HepG2 (cell line): ENCODE measurements at regions of chr4 and their contacts with region 1.

Region 1: DNA sequence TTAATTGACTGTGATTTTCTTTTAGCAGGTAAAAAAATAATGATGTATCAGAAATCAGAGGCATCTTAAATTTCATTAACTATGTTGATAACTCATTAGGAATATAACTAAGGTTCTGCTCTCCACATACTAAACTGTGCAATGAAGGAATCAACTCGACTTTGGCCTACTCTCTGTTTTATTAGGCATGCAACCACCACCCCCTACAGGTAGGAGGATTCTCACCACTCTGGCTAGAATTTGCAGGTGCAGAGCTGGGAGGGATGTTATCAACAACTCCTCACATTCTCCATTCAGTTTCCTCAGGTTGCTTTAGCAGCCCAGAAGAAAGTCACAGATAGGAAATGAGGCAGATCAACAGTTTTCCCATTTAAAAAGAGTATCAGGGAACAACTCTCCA is 160.1 kb downstream of the COX18 start:
- DNase-seq: peak; percentile 10
- ATAC-seq: peak; percentile 74
- H3K4me3 ChIP-seq: no peak overlapping the region
- H3K27ac ChIP-seq: no peak overlapping the region
- H3K4me1 ChIP-seq: no peaks in the 10 kb centered on the region
- H3K27me3 ChIP-seq: no peaks in the 10 kb centered on the region
- CTCF ChIP-seq: peak; percentile 51
- EP300 ChIP-seq: no peak
- POLR2A ChIP-seq: no peak
- RAD21 ChIP-seq: no peak

Region 2: GRCh38 chr4:72505314-72505744 is 404.1 kb before region 1 on chr4:
- CTCF ChIA-PET with region 1: interaction called, 4 read pairs
- POLR2A ChIA-PET with region 1: no interaction called
- in situ Hi-C with region 1: no loop called
- intact Hi-C with region 1: loop called (anchors 1 kb)
- DNase-seq: peak; percentile 24
- ATAC-seq: peak; percentile 92
- H3K4me3 ChIP-seq: no peak overlapping the region
- H3K27ac ChIP-seq: no peak overlapping the region
- H3K4me1 ChIP-seq: no peaks in the 10 kb centered on the region
- H3K27me3 ChIP-seq: no peaks in the 10 kb centered on the region
- CTCF ChIP-seq: peak; percentile 71
- EP300 ChIP-seq: no peak
- POLR2A ChIP-seq: no peak
- RAD21 ChIP-seq: 0 out of 2 replicates have a peak, but pooled peaks have one; percentile 19